WTC11 (cell line): ENCODE measurements at regions of chr4 and their contacts with region 1.

Region 1: GRCh38 chr4:129167640-129168260 is 71.8 kb downstream of the C4orf33 start:
- DNase-seq: peak; percentile 43
- ATAC-seq: peak; percentile 99
- H3K4me3 Mint-ChIP-seq: peak overlapping the region; percentile 18
- H3K27ac Mint-ChIP-seq: no peak overlapping the region
- H3K4me1 Mint-ChIP-seq: peaks cover 13% of the 10 kb centered on the region; the same call in 1 of the 2 replicates
- H3K27me3 Mint-ChIP-seq: no peaks in the 10 kb centered on the region
- CTCF ChIP-seq: no peak

Region 2: GRCh38 chr4:129179276-129179675 is 11.5 kb after region 1 on chr4:
- CTCF ChIA-PET with region 1: interaction called, 11 read pairs
- POLR2A ChIA-PET with region 1: no interaction called
- DNase-seq: no peak
- ATAC-seq: no peak
- H3K4me3 Mint-ChIP-seq: no peak overlapping the region
- H3K27ac Mint-ChIP-seq: no peak overlapping the region
- H3K4me1 Mint-ChIP-seq: no peaks in the 10 kb centered on the region
- H3K27me3 Mint-ChIP-seq: no peaks in the 10 kb centered on the region; the same call in 1 of the 2 replicates
- CTCF ChIP-seq: no peak

Region 3: GRCh38 chr4:129218360-129218759 is 50.6 kb after region 1 on chr4:
- CTCF ChIA-PET with region 1: no interaction called
- POLR2A ChIA-PET with region 1: no interaction called
- DNase-seq: no peak
- ATAC-seq: peak; percentile 81
- H3K4me3 Mint-ChIP-seq: no peak overlapping the region
- H3K27ac Mint-ChIP-seq: no peak overlapping the region
- H3K4me1 Mint-ChIP-seq: no peaks in the 10 kb centered on the region
- H3K27me3 Mint-ChIP-seq: no peaks in the 10 kb centered on the region
- CTCF ChIP-seq: no peak